Mammary epithelial cell (primary cell): ENCODE measurements at regions of chr7 and their contacts with region 1.

Region 1: DNA sequence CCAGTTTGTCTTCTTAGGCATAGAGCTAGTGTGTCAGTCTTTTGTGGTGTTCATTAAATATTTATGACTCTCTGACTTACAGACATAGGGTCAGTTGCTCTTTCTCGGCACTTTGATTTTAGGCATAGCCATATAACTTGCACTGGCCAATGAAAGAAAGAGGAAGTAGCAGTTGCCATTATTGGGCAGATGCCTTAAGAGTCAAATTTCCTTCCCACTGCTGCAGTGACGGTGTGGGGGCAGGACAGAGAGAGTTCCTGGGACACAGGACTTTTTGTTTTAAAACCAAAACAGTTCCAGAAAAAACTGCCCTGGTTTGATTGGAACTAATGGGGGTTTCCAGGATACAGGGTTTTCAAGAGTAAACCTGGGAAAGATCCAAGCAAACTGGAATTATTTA is 60.2 kb upstream of the PHF14 start:
- DNase-seq: no peak
- H3K4me3 ChIP-seq: no peak overlapping the region
- H3K27ac ChIP-seq: no peak overlapping the region
- H3K4me1 ChIP-seq: no peaks in the 10 kb centered on the region
- H3K27me3 ChIP-seq: peaks cover 3% of the 10 kb centered on the region
- CTCF ChIP-seq: no peak

Region 2: GRCh38 chr7:10731253-10731773 is 182.1 kb before region 1 on chr7:
- CTCF ChIA-PET with region 1: no interaction called
- dilution Hi-C with region 1: no loop called
- in situ Hi-C with region 1: no loop called
- intact Hi-C with region 1: no loop called
- DNase-seq: no peak
- H3K4me3 ChIP-seq: no peak overlapping the region
- H3K27ac ChIP-seq: no peak overlapping the region
- H3K4me1 ChIP-seq: no peaks in the 10 kb centered on the region
- H3K27me3 ChIP-seq: no peaks in the 10 kb centered on the region
- CTCF ChIP-seq: no peak

Region 3: DNA sequence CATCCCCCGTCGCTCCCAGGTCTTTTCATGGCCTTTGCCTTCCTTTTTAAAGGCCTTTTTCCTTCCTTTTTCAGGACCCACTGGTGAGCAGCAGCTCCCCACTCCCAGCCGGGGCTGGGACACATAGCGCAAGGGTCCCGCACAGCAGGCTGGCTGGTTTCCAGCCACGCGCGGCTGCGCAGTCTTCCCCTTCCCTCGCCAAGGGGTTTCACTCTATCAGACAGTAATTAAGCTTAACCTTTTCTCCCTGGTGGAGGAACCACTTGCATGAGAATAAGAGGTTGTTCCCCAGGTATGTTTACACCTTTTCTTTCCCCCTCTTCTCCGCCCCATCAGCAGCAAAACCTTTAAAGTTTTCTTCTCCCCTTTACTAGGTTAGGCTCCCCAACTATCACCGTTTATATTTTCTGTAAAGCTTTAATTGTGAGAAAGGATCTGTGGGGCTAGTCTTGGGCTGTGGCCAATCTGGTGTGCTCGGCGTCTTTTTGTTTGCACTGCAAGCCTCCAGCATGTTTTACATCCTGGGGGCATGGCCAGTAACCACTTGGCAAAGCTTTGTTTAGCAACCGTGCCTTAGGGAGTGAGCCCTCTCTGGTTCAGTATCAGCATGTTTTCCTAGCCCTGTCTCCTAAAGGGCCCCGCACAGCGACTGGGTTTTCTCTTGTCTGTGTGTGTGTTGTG is 279.8 kb after region 1 on chr7:
- CTCF ChIA-PET with region 1: no interaction called
- dilution Hi-C with region 1: loop called (anchors 10 kb)
- in situ Hi-C with region 1: no loop called
- intact Hi-C with region 1: no loop called
- DNase-seq: peak; percentile 9
- H3K4me3 ChIP-seq: no peak overlapping the region
- H3K27ac ChIP-seq: no peak overlapping the region
- H3K4me1 ChIP-seq: no peaks in the 10 kb centered on the region
- H3K27me3 ChIP-seq: no peaks in the 10 kb centered on the region
- CTCF ChIP-seq: no peak